ENCODE measurements at regions of chr13 and their contacts with region 1.

Region 1: DNA sequence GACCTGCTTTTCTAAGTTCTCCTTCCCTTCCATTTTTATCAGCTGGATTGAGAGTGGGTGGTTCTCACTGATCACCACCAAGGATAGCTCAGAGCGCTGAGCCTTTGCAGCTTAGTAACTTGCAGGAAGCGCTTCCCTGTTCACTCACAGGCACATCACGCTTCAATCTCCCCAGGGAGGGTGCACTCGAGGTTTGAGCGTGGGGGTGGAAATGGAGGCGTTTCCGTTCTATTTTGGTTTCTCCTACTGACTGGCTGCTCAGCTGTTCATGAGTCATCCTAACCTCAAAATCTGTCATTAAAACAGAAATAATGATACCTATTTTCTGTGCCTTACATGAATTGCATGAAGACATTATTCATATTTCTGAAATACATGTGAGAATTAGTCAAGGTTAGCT is 292.1 kb downstream of the SPRY2 start:
- DNase-seq: peak; percentile 93

Region 2: DNA sequence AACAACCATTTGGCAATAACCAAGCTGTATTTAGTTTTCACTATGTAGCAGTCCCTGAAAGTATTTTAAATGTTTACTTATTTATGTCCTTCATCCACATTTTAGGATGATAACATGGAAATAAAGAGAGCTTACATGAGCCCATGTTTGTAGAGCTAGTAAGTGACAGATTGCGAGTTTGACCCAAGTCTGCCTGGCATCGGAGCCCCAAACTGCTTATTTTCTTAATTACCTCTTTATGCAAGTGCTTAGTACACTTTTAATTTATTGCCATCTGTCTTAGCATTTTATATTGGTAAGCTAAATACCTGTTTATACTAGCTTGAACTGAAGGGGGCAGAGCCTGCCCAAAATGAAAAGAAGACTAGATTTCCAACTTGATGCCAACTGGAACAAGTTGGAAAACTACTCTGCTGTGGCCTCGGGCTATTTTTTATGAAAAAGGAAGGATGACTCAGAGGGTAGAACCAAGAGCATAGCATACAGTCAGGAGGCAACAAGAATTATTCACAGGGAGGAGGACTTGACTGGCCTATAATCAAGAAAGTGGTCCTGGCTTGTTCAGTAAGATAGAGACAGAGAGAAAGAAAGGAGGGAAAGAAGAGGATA is 417.6 kb before region 1 on chr13:
- intact Hi-C with region 1: loop called (anchors 10 kb)
- DNase-seq: no peak

Region 3: GRCh38 chr13:80139196-80139595 is 90.4 kb after region 1 on chr13:
- intact Hi-C with region 1: no loop called
- DNase-seq: no peak

Region 4: GRCh38 chr13:80337288-80338081 is 288.7 kb after region 1 on chr13:
- intact Hi-C with region 1: loop called (anchors 2 kb)
- DNase-seq: no peak

Measured in cardiac septum (tissue), 1 donor.